ENCODE measurements at regions of chr19 and their contacts with region 1.

Region 1: GRCh38 chr19:2950286-2951124 is 5.7 kb upstream of the ZNF77 start:
- DNase-seq: peak; percentile 99
- CTCF ChIP-seq: no peak

Region 2: GRCh38 chr19:2887391-2887914 is 63.1 kb before region 1 on chr19:
- CTCF ChIA-PET with region 1: interaction called, 20 read pairs
- POLR2A ChIA-PET with region 1: no interaction called
- DNase-seq: peak; percentile 70
- CTCF ChIP-seq: peak; percentile 62

Region 3: GRCh38 chr19:2969104-2969504 is 18.6 kb after region 1 on chr19:
- CTCF ChIA-PET with region 1: interaction called, 18 read pairs
- POLR2A ChIA-PET with region 1: no interaction called
- DNase-seq: no peak
- CTCF ChIP-seq: no peak

Region 4: DNA sequence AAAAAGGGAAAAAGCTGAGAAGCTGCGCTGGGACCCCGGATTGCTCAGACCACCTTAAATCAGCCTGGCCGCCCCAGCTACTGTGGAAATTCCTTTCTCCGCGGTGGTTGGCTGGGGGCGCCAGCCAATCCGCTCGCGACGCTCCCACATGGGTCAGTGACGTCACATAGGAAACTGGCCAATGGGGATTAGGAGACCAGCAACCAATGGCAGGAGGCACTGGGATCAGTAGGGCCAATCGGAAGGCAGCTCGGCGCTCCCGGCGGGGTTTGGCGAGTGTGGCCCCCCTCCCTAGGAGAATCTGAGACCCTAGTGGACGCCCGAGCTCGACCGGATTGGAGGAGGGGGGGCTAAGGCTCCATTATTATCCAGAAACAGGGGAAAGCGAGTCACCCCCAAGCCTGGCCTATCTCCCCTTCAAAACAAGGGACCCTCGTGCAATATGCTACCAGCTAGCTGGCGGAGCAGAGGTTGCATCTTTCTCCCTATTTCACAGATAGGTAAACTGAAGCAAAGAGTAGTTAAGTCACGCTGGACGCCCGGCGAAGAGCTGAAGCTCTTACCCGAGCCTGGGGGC is 85.1 kb after region 1 on chr19:
- CTCF ChIA-PET with region 1: interaction called, 16 read pairs
- POLR2A ChIA-PET with region 1: no interaction called
- DNase-seq: peak; percentile 100
- CTCF ChIP-seq: no peak

Region 5: DNA sequence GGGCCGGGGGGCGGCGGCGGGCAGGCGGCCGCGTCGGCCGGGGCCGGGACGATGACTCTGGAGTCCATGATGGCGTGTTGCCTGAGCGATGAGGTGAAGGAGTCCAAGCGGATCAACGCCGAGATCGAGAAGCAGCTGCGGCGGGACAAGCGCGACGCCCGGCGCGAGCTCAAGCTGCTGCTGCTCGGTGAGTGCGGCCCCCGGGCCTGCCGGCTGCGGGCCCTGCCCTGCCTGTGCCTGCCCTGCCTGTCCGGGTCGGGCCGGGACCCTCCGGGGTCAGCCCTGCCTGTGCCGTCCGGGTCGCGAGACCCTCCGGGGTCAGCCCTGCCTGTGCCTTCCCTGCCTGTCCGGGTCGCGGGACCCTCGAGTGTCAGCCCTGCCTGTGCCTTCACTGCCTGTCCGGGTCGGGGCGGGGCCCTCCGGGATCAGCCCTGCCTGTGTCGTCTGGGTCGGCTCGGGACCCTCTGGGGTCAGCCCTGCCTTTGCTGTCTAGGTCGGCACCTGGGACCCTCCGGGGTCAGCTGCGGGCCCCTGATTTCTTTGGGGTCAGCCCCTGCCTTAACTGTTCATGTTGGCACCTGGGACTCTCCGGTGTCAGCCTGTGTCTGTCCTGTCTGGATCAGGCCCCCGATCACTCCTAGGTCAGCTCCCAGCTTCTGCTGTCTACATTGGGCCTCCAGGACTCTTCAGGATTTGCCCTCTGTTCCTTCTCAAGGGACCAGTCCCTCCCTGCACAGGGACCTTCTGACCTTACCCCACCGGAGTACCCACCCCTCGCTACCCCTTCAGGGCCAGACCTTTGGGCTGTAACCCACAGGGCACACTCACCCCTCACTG is 144.3 kb after region 1 on chr19:
- CTCF ChIA-PET with region 1: interaction called, 20 read pairs
- POLR2A ChIA-PET with region 1: interaction called, 3 read pairs
- DNase-seq: no peak
- CTCF ChIP-seq: no peak

Region 6: DNA sequence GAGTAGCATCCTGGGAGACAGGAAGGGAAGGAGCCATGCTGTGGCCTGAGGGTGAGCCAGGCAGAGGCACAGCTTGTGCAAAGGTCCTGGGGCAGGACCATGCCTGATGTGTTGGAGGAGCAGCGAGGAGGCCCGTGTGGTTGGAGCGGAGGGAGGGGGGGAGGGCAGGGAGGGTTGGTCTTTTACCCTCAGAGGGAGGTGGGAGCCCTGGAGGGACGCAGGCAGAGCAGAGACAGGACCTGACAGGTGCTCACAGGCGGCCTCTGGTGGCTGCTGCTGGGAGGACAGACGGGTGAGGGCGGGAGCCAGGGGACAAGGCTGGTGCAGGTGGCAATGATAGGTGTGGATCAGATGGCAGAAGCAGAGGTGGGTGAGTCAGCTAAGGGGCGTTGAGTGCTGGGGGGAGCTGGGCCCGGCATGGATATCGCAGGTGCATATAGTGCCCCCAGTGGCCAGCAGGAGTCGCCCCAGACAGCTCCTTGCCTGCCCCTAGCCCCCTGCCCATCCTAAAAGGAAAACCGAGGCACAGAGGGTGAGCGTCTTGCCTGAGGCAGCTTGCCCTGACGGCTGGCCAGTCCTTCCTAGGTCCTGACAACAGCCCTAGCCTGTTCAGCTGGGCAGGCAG is 175.5 kb after region 1 on chr19:
- CTCF ChIA-PET with region 1: interaction called, 15 read pairs
- POLR2A ChIA-PET with region 1: no interaction called
- DNase-seq: peak; percentile 80
- CTCF ChIP-seq: peak; percentile 70

Region 7: GRCh38 chr19:3176603-3177501 is 226.3 kb after region 1 on chr19:
- CTCF ChIA-PET with region 1: interaction called, 10 read pairs
- POLR2A ChIA-PET with region 1: no interaction called
- DNase-seq: no peak
- CTCF ChIP-seq: no peak